AG04449 (cell line): ENCODE measurements at regions of chr4 and their contacts with region 1.

Region 1: DNA sequence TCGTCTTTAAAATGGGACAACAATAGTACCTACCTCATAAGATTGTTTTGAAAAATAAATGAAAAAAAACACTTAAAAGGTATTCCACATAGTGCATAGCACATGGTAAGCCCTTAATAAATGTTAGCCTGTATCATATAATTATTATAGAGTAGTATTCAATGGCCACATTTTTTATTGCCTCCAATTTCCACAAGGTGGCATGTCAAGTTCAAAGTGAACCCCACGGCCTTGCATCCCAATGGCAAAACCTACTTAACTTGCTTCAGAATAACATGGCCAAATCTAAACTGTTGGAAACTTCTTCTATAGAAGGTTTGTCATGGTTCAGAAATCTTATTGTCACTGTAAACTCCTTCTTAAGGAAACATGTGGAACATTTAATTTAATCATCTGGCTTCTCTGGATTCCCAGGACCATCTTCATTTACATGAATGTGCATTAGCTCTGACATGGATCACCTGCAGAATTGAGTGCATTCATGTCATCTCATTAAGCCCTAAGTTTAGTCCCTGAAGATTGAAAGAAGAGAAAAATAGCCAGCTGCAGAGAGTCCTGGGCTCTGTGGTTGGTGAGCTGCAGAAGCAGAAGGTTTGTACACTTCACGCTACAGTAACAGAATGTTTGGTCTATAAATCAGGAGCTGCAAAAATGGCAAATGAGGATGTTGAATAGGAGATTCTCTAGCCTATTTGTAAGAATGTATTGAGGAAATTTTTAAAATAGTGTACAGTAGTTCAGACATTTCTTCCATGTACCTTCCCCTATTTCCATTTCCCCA is 61.0 kb downstream of the ANXA3 start:
- DNase-seq: no peak
- H3K4me3 ChIP-seq: no peak overlapping the region
- CTCF ChIP-seq: peak; percentile 35

Region 2: GRCh38 chr4:78634011-78634664 is 21.6 kb after region 1 on chr4:
- CTCF ChIA-PET with region 1: interaction called, 22 read pairs
- POLR2A ChIA-PET with region 1: no interaction called
- DNase-seq: no peak
- H3K4me3 ChIP-seq: no peak overlapping the region
- CTCF ChIP-seq: no peak

Region 3: GRCh38 chr4:78691971-78692821 is 79.6 kb after region 1 on chr4:
- CTCF ChIA-PET with region 1: no interaction called
- POLR2A ChIA-PET with region 1: no interaction called
- DNase-seq: no peak
- H3K4me3 ChIP-seq: no peak overlapping the region
- CTCF ChIP-seq: no peak

Region 4: GRCh38 chr4:78864405-78865024 is 251.9 kb after region 1 on chr4:
- CTCF ChIA-PET with region 1: interaction called, 98 read pairs
- POLR2A ChIA-PET with region 1: no interaction called
- DNase-seq: peak; percentile 38
- H3K4me3 ChIP-seq: no peak overlapping the region
- CTCF ChIP-seq: peak; percentile 41

Region 5: DNA sequence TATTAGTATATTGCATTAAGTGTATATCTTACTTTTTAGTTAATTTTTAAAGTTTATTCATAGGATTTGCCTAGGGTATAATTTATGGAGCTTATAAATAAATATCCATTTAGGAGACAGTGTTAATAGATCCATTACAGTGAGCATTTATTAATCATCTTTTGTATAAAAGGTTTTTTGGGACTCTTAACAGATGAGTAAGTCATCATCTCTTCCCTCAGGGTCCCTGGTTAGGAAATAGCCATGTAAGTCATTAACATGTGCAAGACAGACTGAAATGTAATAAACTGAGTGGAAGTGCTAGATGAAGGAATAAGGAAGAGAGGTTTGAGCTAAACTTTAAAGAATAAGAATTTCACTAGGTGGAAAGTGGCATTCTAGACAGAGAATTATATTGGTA is 257.5 kb after region 1 on chr4:
- CTCF ChIA-PET with region 1: interaction called, 98 read pairs
- POLR2A ChIA-PET with region 1: no interaction called
- DNase-seq: no peak
- H3K4me3 ChIP-seq: no peak overlapping the region
- CTCF ChIP-seq: no peak